Activated naive CD4-positive, alpha-beta T cell treated with anti-CD3 and anti-CD28 coated beads for 36 hours (primary cell): ENCODE measurements at regions of chr3 and their contacts with region 1.

Region 1: GRCh38 chr3:124905849-124906248 is 18.7 kb upstream of the ITGB5 start:
- DNase-seq: no peak
- H3K4me3 Mint-ChIP-seq: no peak overlapping the region
- H3K27ac Mint-ChIP-seq: peak overlapping the region; percentile 6
- H3K4me1 Mint-ChIP-seq: peaks cover 2% of the 10 kb centered on the region
- H3K27me3 Mint-ChIP-seq: peaks cover 5% of the 10 kb centered on the region

Region 2: GRCh38 chr3:124761250-124761796 is 144.5 kb before region 1 on chr3:
- CTCF ChIA-PET with region 1: interaction called, 156 read pairs
- intact Hi-C with region 1: loop called (anchors 1 kb)
- DNase-seq: peak; percentile 87
- H3K4me3 Mint-ChIP-seq: peak overlapping the region; percentile 44
- H3K27ac Mint-ChIP-seq: no peak overlapping the region
- H3K4me1 Mint-ChIP-seq: peaks cover 7% of the 10 kb centered on the region
- H3K27me3 Mint-ChIP-seq: no peaks in the 10 kb centered on the region

Region 3: GRCh38 chr3:124786441-124787241 is 119.2 kb before region 1 on chr3:
- CTCF ChIA-PET with region 1: interaction called, 18 read pairs
- intact Hi-C with region 1: loop called (anchors 1 kb)
- DNase-seq: no peak
- H3K4me3 Mint-ChIP-seq: no peak overlapping the region
- H3K27ac Mint-ChIP-seq: no peak overlapping the region
- H3K4me1 Mint-ChIP-seq: no peaks in the 10 kb centered on the region
- H3K27me3 Mint-ChIP-seq: no peaks in the 10 kb centered on the region

Region 4: DNA sequence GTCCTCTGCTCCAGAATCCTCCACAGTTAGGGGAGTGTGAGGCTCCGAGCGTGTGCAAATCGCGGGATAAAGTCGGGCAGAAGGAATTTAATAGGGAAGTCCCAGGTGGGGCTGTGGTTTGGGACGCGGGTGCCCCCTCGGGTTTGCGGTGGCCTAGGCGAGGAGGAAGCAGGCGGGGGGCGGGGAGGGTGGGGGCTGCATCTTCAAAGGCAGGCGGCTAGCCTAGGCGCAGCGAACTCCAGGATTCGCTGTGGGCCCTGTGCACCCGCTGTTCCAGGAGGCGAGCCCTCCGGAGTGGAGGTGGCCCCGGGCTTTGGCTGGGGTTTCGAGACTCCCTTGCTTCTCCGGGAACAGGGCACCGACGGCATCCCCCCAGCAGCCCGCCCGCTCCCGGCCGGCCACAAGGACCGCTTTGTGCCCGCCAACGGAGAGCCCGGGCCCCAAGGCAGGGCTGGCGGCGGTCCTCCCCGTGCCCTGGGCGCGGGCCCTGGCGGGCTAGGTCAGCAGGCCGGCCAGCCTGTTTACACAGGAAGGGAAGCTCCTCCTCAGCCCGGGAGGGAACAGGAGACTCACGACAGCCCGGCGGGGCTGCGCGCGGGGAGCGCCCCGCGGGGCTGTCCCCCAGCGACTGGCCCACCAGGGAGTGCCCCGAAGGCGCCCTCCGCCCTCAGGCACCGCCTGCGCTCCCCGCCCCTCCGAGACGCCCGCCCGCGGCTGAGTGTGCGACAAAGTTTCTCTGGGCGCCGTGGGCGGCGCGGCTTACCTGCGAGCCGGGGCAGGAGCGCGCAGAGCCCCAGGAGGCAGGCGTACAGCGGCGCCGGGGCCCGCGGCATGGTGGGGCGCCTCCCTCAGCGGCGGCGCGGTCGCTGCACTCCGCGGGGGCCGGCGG is 19.4 kb before region 1 on chr3:
- CTCF ChIA-PET with region 1: interaction called, 13 read pairs
- intact Hi-C with region 1: no loop called
- DNase-seq: peak; percentile 51
- H3K4me3 Mint-ChIP-seq: peak overlapping the region; percentile 3
- H3K27ac Mint-ChIP-seq: no peak overlapping the region
- H3K4me1 Mint-ChIP-seq: no peaks in the 10 kb centered on the region
- H3K27me3 Mint-ChIP-seq: peaks cover 35% of the 10 kb centered on the region